Activated CD4-positive, alpha-beta memory T cell treated with anti-CD3 and anti-CD28 coated beads, Interleukin-2, amount 10 ng/mL, durations not matched to agents 7 days and 5 days (primary cell): ENCODE measurements at regions of chr2 and their contacts with region 1.

Region 1: DNA sequence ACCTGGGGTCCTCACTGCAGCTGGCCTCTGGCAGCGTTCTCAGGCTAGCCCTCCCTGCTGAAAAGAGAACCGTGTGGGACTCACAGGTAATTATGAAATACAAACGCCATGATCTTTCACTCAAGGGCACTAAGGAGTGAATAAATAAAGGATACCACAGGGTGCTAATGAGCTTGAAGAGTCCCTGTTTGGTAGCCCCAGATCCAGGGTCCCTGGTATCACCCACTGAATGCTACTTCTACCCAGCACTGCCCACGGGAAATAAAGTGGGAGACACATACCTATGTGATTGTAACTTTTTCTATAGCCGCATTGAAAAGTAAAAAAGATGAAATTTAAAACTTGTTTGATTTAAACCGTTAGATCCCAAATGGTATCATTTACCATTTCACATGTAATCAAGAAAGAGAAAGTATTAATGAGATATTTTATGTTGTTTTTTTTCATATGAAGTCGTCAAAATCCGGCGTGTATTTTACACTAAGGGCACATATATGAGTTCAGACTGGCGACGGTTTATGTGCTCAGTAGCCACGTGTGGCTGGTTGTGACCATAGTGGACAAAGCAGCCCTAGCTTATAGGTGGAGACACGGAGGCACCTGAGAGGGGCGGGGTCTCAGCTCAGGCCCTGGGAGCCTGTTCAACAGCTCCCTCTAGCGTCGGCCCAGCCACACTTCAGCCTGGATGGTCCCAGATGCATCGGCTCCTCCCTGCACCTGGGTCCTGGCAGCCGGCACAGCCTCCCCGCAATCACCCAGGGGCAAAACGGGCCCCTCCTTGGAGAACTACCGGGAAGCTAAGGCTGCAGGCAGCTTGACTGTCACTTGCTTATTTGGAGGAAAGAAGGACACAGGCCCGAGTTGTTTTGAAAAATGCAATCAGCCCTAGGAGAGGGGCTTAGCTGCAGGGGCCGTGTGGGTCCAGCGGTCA is 39.2 kb downstream of the ODC1 start:
- DNase-seq: peak; percentile 85
- H3K4me3 Mint-ChIP-seq: peak overlapping the region; percentile 74
- H3K27ac Mint-ChIP-seq: peak overlapping the region; percentile 93
- H3K4me1 Mint-ChIP-seq: peaks cover 36% of the 10 kb centered on the region
- H3K27me3 Mint-ChIP-seq: no peaks in the 10 kb centered on the region

Region 2: DNA sequence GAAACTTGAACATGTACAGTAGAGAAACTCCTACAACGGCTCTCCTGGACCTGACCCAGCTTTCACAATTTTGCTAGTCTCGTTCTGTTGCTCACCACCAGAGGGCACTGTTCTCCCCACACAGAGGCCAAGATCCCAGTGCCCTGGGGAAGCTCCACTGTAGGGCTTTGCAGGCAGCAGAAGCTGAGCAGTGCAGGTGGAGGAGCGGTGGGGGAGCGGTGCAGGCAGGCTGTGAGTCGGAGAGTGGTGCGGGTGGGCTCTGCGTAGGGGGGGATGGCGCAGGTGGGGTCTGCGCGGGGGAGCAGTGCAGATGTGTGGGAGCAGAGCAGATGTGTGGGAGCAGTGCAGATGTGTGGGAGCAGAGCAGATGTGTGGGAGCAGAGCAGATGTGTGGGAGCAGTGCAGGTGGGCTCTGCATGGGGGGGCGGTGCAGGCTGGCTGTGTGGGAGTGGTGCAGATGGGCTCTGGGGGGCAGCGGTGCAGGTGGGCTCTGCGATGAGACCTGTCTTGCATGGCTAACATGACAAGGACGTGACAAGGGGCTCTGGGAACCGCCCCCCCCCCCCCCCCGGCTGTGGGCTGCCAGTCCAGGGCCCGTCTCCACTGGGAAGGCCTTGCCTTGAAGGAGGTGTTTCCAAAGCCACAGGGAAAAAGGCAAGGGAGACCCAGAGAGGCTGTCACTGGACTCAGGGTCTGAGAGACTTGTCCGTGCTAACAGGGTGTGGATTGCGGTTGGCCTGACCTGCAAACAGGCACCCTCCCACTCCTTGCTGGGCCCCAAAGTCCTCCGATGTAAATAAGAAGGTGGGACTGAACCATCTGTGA is 336.0 kb before region 1 on chr2:
- CTCF ChIA-PET with region 1: interaction called, 47 read pairs
- POLR2A ChIA-PET with region 1: interaction called, 4 read pairs
- DNase-seq: peak; percentile 84
- H3K4me3 Mint-ChIP-seq: no peak overlapping the region
- H3K27ac Mint-ChIP-seq: no peak overlapping the region
- H3K4me1 Mint-ChIP-seq: peaks cover 7% of the 10 kb centered on the region
- H3K27me3 Mint-ChIP-seq: peaks cover 49% of the 10 kb centered on the region

Region 3: GRCh38 chr2:10141736-10142642 is 266.9 kb before region 1 on chr2:
- CTCF ChIA-PET with region 1: interaction called, 78 read pairs
- POLR2A ChIA-PET with region 1: interaction called, 16 read pairs
- DNase-seq: peak; percentile 36
- H3K4me3 Mint-ChIP-seq: no peak overlapping the region
- H3K27ac Mint-ChIP-seq: peak overlapping the region; percentile 53
- H3K4me1 Mint-ChIP-seq: peaks cover 27% of the 10 kb centered on the region
- H3K27me3 Mint-ChIP-seq: no peaks in the 10 kb centered on the region

Region 4: GRCh38 chr2:10225291-10226037 is 183.4 kb before region 1 on chr2:
- CTCF ChIA-PET with region 1: interaction called, 10 read pairs
- POLR2A ChIA-PET with region 1: no interaction called
- DNase-seq: no peak
- H3K4me3 Mint-ChIP-seq: no peak overlapping the region
- H3K27ac Mint-ChIP-seq: no peak overlapping the region
- H3K4me1 Mint-ChIP-seq: peaks cover 2% of the 10 kb centered on the region
- H3K27me3 Mint-ChIP-seq: no peaks in the 10 kb centered on the region

Region 5: GRCh38 chr2:10331027-10331701 is 77.8 kb before region 1 on chr2:
- CTCF ChIA-PET with region 1: interaction called, 43 read pairs
- POLR2A ChIA-PET with region 1: interaction called, 41 read pairs
- DNase-seq: peak; percentile 82
- H3K4me3 Mint-ChIP-seq: peak overlapping the region; percentile 79
- H3K27ac Mint-ChIP-seq: peak overlapping the region; percentile 83
- H3K4me1 Mint-ChIP-seq: peaks cover 57% of the 10 kb centered on the region
- H3K27me3 Mint-ChIP-seq: no peaks in the 10 kb centered on the region

Region 6: GRCh38 chr2:10448208-10448645 is 39.3 kb after region 1 on chr2 and contains the start of gene ODC1:
- CTCF ChIA-PET with region 1: interaction called, 12 read pairs
- POLR2A ChIA-PET with region 1: interaction called, 14 read pairs
- DNase-seq: peak; percentile 96
- H3K4me3 Mint-ChIP-seq: peak within 1 kb of the TSS; percentile 85
- H3K27ac Mint-ChIP-seq: peak within 1 kb of the TSS; percentile 82
- H3K4me1 Mint-ChIP-seq: peaks cover 54% of the 10 kb centered on the region
- H3K27me3 Mint-ChIP-seq: no peaks in the 10 kb centered on the region
- total RNA-seq, gene ODC1: 48.1 to 54.9 TPM

Region 7: DNA sequence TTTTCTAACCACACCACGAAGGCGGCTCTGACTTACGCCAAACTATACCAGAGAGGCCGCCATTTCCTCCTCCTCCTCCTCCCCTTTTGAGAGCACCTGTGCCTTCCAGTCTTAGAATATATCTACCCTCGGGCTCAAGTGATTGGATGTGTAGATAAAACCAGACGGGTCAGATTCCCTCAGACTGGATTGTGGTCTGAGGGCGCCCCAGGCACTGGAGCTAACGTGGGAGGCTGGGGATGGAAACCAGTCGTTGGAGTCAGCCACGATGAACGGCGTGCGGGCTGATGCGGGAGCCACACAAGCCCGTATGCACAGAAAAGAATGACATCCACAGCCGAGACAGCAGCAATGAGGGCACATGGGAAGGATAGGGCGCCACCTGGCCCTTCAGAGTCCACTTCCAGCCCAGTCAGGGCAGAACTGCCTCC is 51.5 kb after region 1 on chr2:
- CTCF ChIA-PET with region 1: no interaction called
- POLR2A ChIA-PET with region 1: no interaction called
- DNase-seq: no peak
- H3K4me3 Mint-ChIP-seq: no peak overlapping the region
- H3K27ac Mint-ChIP-seq: no peak overlapping the region
- H3K4me1 Mint-ChIP-seq: peaks cover 2% of the 10 kb centered on the region
- H3K27me3 Mint-ChIP-seq: peaks cover 35% of the 10 kb centered on the region

Region 8: GRCh38 chr2:10688921-10689807 is 280.2 kb after region 1 on chr2:
- CTCF ChIA-PET with region 1: no interaction called
- POLR2A ChIA-PET with region 1: no interaction called
- DNase-seq: peak; percentile 36
- H3K4me3 Mint-ChIP-seq: no peak overlapping the region
- H3K27ac Mint-ChIP-seq: no peak overlapping the region
- H3K4me1 Mint-ChIP-seq: peaks cover 9% of the 10 kb centered on the region
- H3K27me3 Mint-ChIP-seq: no peaks in the 10 kb centered on the region